ENCODE measurements at regions of chr15 and their contacts with region 1.

Region 1: DNA sequence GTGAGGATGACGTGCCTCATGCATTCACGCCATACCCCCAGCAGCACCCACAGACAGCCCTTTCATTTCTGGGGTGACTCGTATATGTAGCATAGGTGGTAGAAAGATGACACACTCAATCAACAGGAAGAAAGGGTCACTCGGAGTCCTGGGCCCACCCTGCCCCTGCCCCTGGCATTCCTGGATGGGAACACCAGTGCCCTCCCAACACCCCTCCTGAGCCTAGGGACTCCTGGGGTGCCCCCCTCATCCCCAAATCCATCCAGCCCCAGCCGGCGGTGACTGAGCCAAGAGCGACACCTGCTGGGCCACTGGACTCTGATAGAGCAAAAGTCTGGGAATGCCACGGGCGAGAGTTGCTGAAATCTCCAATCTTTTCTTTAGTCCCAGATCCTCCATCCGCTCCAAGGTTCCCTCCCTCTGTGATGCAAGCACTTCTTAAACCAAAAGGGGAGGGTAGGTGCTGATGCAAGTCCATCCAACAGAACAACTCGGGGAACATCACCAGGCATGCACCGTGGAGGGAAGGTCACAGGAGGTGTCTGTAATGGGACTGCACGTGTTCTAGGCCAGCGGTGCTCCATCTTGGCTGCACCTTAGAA is 31.1 kb downstream of the ACAN start:
- DNase-seq: peak; percentile 16
- H3K4me3 ChIP-seq: no peak overlapping the region
- H3K27ac ChIP-seq: no peak overlapping the region
- H3K4me1 ChIP-seq: no peaks in the 10 kb centered on the region
- CTCF ChIP-seq: peak; percentile 77

Region 2: DNA sequence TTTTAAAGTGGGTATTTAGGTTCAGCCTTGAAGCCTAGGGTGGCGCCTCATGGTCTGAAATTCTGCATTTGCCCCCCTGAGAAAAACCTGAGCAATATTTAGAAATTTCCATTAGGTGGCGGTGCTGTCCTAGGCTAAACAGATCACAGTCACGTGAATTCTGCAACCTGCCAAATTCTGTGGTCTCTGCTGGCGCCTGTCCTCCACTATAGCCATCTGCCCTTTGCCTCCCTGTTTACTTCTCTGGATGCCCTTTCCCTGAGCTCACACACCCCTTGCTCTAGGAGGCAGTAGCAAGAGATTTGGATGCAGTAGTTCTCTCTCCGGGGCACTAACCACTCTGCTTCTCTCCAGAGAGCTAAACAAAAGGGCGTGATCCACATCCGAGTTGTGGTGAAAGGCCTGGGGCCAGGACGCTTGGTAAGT is 357.7 kb before region 1 on chr15:
- CTCF ChIA-PET with region 1: interaction called, 3 read pairs
- POLR2A ChIA-PET with region 1: no interaction called
- intact Hi-C with region 1: loop called (anchors 1 kb)
- DNase-seq: peak; percentile 63
- H3K4me3 ChIP-seq: no peak overlapping the region
- H3K27ac ChIP-seq: no peak overlapping the region
- H3K4me1 ChIP-seq: peaks cover 6% of the 10 kb centered on the region
- CTCF ChIP-seq: peak; percentile 82

Measured in OCI-LY7 (cell line).